ENCODE measurements at regions of chr14 and their contacts with region 1.

Region 1: GRCh38 chr14:95561001-95561412 is 26.2 kb downstream of the GLRX5 start:
- DNase-seq: peak; percentile 89

Region 2: DNA sequence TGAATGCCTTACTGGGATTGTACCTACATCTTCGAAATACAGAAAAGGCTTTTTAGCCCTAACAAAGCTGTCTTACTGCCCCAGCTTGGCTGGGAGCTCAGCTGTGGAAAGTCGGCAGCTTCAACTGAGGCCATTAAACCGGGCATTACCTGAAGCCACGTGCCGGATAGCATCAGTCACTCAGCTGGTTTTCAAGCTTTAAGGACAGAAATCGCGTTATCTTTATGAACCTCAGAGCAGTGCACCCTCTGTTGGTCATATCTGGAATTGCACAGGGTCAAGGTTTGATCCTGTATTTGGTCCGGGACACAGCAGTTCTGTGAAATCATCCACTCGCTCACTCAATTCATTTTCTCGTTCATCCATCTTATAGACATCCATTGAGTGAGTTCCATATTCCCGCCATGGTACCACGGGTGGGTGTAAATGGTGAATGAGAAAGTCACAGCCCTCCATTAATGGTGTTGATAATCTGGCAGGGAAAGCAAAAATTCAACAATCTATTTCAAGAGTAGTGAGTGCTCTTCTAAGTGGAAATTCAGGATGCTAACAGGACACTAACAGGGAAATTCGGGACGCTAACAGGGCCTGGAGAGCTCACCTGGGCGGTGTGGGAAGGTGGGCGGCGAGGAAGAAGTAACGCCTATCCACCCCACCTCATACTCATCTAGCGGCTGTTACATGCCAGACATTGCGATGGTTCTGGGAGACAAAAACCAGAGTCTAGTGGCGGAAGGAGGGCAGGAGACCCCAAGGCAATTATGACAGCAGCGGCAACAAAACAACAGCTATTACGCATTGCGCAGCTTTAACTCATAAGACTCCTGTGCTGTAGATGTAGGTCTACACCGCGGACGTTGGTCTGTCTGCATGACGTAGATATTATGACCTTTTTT is 213.5 kb after region 1 on chr14:
- intact Hi-C with region 1: loop called (anchors 5 to 10 kb)
- DNase-seq: peak; percentile 58

Measured in posterior vena cava (tissue), 2 donors.